HEK293T (cell line): ENCODE measurements at regions of chr2 and their contacts with region 1.

Region 1: GRCh38 chr2:54570925-54571694 is 115.0 kb downstream of the SPTBN1 start:
- DNase-seq: no peak

Region 2: DNA sequence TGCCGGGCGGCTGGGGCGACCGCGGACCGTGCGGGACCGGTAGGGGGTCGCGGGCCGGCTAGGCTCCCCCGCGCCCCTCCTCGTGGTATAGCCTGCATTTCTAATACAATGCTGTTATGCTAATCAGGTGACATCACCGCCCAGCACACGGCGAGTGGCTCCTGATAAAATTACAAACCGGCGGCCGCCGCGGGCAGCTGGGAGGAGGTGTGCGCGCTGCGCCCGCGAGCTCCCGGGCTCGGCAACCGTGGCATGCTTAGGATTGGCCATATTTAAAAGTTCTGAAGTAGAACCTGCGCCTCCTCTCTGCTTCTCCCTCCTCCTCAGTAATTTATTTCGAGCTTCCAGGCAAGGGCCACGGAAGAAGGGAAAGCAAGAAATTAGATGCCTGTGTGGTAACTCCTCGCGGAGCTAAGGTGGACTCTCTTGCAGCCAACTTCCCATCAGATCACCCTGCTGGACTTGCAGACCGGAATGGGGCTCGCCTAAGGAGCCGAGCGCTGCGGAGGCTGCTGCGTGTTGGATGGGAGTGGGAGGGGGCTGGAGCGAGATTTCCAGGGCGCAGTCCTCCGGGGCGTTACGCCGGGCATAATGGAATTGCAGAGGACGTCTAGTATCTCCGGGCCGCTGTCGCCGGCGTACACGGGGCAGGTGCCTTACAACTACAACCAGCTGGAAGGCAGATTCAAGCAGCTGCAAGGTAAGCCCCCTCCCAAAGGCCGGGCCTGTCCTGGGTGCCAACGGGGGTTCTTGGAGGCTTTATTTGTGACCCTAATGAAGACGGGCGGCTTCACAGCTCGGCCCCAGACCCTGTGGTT is 12.7 kb before region 1 on chr2:
- CTCF ChIA-PET with region 1: interaction called, 4 read pairs
- POLR2A ChIA-PET with region 1: interaction called, 66 read pairs
- DNase-seq: peak; percentile 72

Region 3: DNA sequence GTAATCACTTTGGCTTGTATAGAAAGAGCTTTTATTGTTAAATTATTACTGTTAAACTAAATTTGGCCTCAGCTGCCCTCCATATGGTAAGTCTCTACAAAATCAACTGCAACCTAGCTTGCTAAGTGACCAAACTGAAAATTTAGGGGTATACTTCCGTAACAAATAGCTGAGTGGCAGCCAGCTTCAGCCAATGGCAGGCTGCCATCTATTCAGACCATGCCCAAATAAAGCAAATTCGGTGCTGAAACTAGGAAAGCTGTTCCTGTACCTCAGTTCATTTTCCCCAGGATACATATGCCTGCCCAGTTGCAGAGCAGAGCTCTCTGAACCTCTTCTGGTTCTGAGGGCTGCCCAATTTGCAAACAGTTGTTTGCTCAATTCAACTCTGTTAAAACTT is 247.1 kb after region 1 on chr2:
- CTCF ChIA-PET with region 1: no interaction called
- POLR2A ChIA-PET with region 1: no interaction called
- DNase-seq: no peak